A549 (cell line): ENCODE measurements at regions of chr1 and their contacts with region 1.

Region 1: GRCh38 chr1:165586435-165586834 is 42.6 kb downstream of the LRRC52 start:
- DNase-seq: no peak
- ATAC-seq: no peak
- H3K4me3 ChIP-seq: no peak overlapping the region
- H3K27ac ChIP-seq: no peak overlapping the region
- H3K4me1 ChIP-seq: no peaks in the 10 kb centered on the region
- CTCF ChIP-seq: no peak
- EP300 ChIP-seq: no peak
- POLR2A ChIP-seq: no peak
- RAD21 ChIP-seq: no peak

Region 2: GRCh38 chr1:165403835-165404482 is 182.5 kb before region 1 on chr1:
- CTCF ChIA-PET with region 1: interaction called, 219 read pairs
- POLR2A ChIA-PET with region 1: no interaction called
- DNase-seq: peak; percentile 21 to 28
- ATAC-seq: peak; percentile 80 to 87
- H3K4me3 ChIP-seq: no peak overlapping the region
- H3K27ac ChIP-seq: no peak overlapping the region
- H3K4me1 ChIP-seq: no peaks in the 10 kb centered on the region
- CTCF ChIP-seq: peak; percentile 60
- EP300 ChIP-seq: no peak
- POLR2A ChIP-seq: no peak
- RAD21 ChIP-seq: peak; percentile 75 to 76